Posterior cingulate gyrus (tissue), 11 donors: ENCODE measurements at regions of chr20 and their contacts with region 1.

Region 1: GRCh38 chr20:21719592-21720214 is 14.2 kb downstream of the PAX1 start:
- DNase-seq: peak in 5 of 10 donors; percentile 54 to 73 (median 63)

Region 2: DNA sequence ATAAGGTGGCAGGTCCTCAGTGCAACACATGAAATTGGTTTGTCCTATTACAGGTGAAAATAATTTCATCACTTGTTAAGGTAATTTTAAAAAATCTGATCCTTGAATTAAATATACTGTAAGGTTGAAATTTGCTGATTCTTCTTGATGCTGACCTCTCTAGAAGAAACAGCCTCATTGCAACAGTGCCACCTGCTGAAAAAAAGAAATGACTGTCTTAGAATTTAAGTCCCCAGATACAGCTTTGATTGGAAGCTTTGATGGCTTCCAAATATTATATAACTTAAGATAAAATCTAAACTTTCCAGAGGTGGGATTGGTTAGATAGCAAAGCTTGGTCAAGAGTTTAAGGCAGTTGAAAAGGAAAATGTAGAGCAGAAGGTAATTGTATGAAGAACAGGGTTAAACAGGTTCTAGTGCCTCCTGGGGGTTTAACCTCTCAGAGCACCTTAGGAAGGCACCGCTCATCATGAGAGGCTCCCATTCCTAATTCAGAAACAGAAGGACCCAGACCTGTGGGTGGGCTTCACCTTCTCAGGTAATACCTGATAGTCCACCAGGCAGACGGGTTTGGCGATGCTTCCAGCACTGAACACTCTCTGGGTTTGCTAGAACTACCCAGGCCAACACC is 386.7 kb after region 1 on chr20:
- intact Hi-C with region 1: loop called (anchors 5 kb)
- DNase-seq: no peak

Region 3: DNA sequence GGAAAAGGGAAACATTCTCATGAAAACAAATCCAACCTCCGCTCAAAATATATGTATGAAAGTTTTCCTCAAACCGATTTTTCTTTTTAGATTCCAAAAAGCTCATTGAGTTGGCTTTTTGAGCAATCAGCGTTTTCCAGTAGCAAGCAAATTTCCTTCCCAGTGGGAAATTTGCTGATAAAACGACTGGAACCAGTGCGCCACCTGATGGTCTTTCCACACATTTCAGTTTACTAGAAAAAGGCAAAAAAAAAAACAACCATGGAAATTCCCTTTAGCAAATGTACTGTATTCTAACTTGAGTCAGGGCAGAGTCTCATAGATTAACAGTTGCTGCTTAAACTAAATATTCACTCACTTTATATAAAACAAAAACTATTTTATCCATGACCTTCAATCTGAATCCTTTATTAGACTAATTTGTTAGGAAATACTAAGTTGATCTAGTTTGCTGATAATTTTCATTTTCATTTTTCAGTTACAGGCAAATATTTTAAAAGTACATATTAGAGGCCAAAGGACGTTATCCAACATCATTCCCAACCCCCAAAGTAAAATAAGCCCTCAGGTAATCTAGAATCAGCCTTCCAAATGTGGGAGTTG is 593.1 kb after region 1 on chr20:
- intact Hi-C with region 1: loop called (anchors 2 kb)
- DNase-seq: peak in 5 of 10 donors; percentile 14 to 32 (median 23)